Ascending aorta (tissue), 2 donors: ENCODE measurements at regions of chr1 and their contacts with region 1.

Region 1: GRCh38 chr1:213457097-213457680 is 406.1 kb downstream of the RPS6KC1 start:
- DNase-seq: peak; percentile 34 to 85
- H3K4me3 ChIP-seq: peak overlapping the region; percentile 11 to 25
- H3K27ac ChIP-seq: peak overlapping the region; percentile 73 to 77
- H3K4me1 ChIP-seq: peaks cover 3 to 15% of the 10 kb centered on the region in 2 donors
- H3K27me3 ChIP-seq: no peaks in the 10 kb centered on the region
- CTCF ChIP-seq: no peak

Region 2: DNA sequence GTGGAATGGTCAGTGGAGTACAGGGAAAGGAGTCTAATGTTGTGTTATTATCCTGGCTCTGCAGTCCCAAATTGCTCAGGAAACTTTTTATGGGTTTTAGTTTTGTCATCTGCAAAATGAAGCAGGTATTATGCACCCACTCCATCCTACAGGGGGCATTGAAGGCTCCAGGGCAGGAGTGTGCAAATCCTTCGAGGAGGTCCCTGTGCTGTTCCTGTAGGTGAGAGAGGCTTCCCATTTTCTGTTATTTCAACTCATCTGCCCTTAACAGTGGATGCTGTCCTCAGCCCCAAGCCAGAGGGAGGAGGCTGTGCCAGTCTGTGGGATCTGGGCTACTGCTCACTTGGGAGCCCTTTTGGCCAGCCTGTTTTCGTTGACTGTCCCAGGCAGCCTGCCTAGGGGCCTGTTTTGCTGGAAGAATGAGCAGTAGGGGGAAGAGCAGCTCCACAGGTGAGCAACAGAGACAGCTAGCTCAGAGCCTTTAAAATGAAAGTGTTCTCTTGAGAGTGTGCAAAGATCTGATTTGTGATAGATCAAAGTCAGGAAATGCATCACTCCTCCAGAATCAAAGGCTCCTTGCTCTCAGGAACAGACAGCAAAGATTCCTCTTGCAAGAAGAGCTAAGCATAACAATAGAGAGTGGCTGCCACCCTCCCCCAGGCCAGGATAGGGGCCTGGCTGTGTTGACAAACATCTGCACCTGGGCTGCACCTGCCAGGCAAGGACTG is 212.9 kb after region 1 on chr1:
- intact Hi-C with region 1: no loop called
- DNase-seq: no peak
- H3K4me3 ChIP-seq: no peak overlapping the region
- H3K27ac ChIP-seq: no peak overlapping the region
- H3K4me1 ChIP-seq: no peaks in the 10 kb centered on the region
- H3K27me3 ChIP-seq: no peaks in the 10 kb centered on the region
- CTCF ChIP-seq: no peak

Region 3: DNA sequence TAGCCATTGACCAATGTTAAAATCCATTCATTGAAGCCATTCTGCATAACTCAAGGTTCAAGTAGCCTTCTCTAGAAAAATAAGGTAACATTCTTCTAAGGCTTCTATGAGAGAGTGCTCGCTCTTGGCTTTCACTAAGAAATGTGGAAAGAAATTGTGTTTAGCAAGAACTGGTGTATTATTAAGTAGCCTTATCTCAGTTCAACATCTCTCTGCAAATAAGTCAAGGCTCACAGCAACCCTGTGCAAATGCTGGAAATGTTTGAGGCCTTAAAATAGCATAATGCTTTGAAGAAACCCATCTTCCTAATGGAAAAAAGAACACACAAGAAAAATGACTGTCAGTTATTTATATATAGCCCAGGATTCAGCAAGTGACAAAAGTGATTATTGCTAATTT is 276.5 kb after region 1 on chr1:
- intact Hi-C with region 1: no loop called
- DNase-seq: no peak
- H3K4me3 ChIP-seq: no peak overlapping the region
- H3K27ac ChIP-seq: no peak overlapping the region
- H3K4me1 ChIP-seq: no peaks in the 10 kb centered on the region
- H3K27me3 ChIP-seq: no peaks in the 10 kb centered on the region
- CTCF ChIP-seq: no peak

Region 4: GRCh38 chr1:213987927-213988506 is 530.8 kb after region 1 on chr1 and contains the start of gene PROX1:
- intact Hi-C with region 1: loop called (anchors 10 kb)
- DNase-seq: no peak
- H3K4me3 ChIP-seq: peak within 1 kb of the TSS; percentile 52 to 68
- H3K27ac ChIP-seq: peak within 1 kb of the TSS; percentile 32 to 70
- H3K4me1 ChIP-seq: peaks cover 7 to 16% of the 10 kb centered on the region in 2 donors
- H3K27me3 ChIP-seq: peaks cover 21% of the 10 kb centered on the region
- CTCF ChIP-seq: no peak
- total RNA-seq, gene PROX1: 0.32 TPM